ENCODE measurements at regions of chr4 and their contacts with region 1.

Region 1: DNA sequence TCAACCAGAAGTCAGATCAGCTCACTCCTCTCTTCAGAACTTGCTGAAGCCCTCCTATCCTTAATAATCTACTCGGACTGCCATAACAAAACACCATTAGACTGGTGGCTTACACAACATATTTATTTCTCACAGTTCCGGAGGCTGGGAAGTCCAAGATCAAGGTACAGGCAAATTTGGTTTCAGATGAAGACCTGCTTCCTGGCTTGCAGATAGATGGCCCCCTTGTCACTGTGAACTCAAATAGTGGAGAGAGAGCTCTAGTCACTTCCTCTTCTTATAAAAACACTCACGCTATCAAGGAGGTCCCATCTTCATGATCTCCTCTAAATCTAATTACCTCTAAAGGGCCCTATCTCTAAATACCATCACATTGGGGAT is 125.1 kb downstream of the CAMK2D start:
- DNase-seq: peak; percentile 84
- H3K4me3 ChIP-seq: peak overlapping the region; percentile 55
- H3K27ac ChIP-seq: peak overlapping the region; percentile 93
- H3K4me1 ChIP-seq: peaks cover 69% of the 10 kb centered on the region
- CTCF ChIP-seq: peak; percentile 72

Region 2: GRCh38 chr4:113394730-113395530 is 241.5 kb before region 1 on chr4:
- CTCF ChIA-PET with region 1: no interaction called
- POLR2A ChIA-PET with region 1: no interaction called
- intact Hi-C with region 1: loop called (anchors 10 kb)
- DNase-seq: peak; percentile 85
- H3K4me3 ChIP-seq: no peak overlapping the region
- H3K27ac ChIP-seq: no peak overlapping the region
- H3K4me1 ChIP-seq: no peaks in the 10 kb centered on the region
- CTCF ChIP-seq: peak; percentile 94

Region 3: GRCh38 chr4:113564493-113564892 is 71.9 kb before region 1 on chr4:
- CTCF ChIA-PET with region 1: interaction called, 10 read pairs
- POLR2A ChIA-PET with region 1: interaction called, 91 read pairs
- intact Hi-C with region 1: loop called (anchors 1 kb)
- DNase-seq: peak; percentile 67
- H3K4me3 ChIP-seq: peak overlapping the region; percentile 48
- H3K27ac ChIP-seq: peak overlapping the region; percentile 99
- H3K4me1 ChIP-seq: peaks cover 90% of the 10 kb centered on the region
- CTCF ChIP-seq: no peak

Region 4: DNA sequence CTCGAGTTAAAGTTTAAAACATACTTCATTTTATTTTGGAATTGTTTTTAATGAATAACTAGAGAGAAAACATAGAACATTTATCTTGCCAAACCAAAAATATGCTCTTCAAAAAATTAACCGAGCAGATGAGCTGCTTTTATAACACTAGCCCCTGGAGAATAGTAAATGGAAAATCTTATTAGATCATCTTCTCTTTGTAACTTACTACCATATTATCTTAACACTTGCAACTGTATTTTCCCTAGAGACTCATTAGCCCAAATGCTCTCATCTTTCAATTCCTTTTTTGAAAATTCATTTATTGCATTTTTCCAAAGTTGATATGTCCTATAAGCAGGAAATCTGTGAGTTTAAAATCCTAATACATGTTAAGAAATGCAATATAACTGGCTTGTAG is 18.2 kb before region 1 on chr4:
- CTCF ChIA-PET with region 1: interaction called, 3 read pairs
- POLR2A ChIA-PET with region 1: interaction called, 29 read pairs
- intact Hi-C with region 1: no loop called
- DNase-seq: peak; percentile 55
- H3K4me3 ChIP-seq: no peak overlapping the region
- H3K27ac ChIP-seq: peak overlapping the region; percentile 44
- H3K4me1 ChIP-seq: peaks cover 82% of the 10 kb centered on the region
- CTCF ChIP-seq: no peak

Region 5: DNA sequence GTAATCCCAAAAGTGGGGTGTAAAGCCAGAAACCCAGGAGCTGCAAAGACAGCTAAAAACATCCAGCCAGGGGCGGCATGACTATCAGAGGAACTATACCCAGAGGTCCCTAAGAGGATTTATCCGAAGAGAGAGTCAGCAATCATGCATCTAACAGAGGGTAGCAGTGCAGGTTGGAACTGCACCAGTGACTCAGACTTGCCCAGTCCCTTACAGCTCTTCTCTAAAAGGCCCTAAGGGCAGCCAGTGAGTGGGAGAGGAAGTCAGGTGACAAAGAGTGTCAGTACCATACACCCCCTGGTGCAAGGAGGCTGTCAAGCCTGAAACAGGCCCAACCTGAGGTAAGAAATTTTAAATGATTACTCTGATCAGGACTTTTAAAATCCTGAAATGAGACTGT is 37.0 kb after region 1 on chr4:
- CTCF ChIA-PET with region 1: no interaction called
- POLR2A ChIA-PET with region 1: interaction called, 64 read pairs
- intact Hi-C with region 1: no loop called
- DNase-seq: peak; percentile 50
- H3K4me3 ChIP-seq: no peak overlapping the region
- H3K27ac ChIP-seq: peak overlapping the region; percentile 2
- H3K4me1 ChIP-seq: peaks cover 55% of the 10 kb centered on the region
- CTCF ChIP-seq: 0 out of 2 replicates have a peak, but pooled peaks have one; percentile 18

Region 6: GRCh38 chr4:113761620-113762185 is 125.3 kb after region 1 on chr4 and contains the start of gene CAMK2D:
- CTCF ChIA-PET with region 1: no interaction called
- POLR2A ChIA-PET with region 1: interaction called, 27 read pairs
- intact Hi-C with region 1: loop called (anchors 1 kb)
- DNase-seq: peak; percentile 91
- H3K4me3 ChIP-seq: peak within 1 kb of the TSS; percentile 89
- H3K27ac ChIP-seq: peak within 1 kb of the TSS; percentile 99
- H3K4me1 ChIP-seq: peaks cover 27% of the 10 kb centered on the region
- CTCF ChIP-seq: peak; percentile 76
- total RNA-seq, gene CAMK2D: 109 and 120 TPM in 2 replicates

Region 7: GRCh38 chr4:113958766-113959538 is 322.5 kb after region 1 on chr4:
- CTCF ChIA-PET with region 1: no interaction called
- POLR2A ChIA-PET with region 1: no interaction called
- intact Hi-C with region 1: no loop called
- DNase-seq: no peak
- H3K4me3 ChIP-seq: no peak overlapping the region
- H3K27ac ChIP-seq: no peak overlapping the region
- H3K4me1 ChIP-seq: no peaks in the 10 kb centered on the region
- CTCF ChIP-seq: no peak